SK-N-SH (cell line): ENCODE measurements at regions of chr7 and their contacts with region 1.

Region 1: DNA sequence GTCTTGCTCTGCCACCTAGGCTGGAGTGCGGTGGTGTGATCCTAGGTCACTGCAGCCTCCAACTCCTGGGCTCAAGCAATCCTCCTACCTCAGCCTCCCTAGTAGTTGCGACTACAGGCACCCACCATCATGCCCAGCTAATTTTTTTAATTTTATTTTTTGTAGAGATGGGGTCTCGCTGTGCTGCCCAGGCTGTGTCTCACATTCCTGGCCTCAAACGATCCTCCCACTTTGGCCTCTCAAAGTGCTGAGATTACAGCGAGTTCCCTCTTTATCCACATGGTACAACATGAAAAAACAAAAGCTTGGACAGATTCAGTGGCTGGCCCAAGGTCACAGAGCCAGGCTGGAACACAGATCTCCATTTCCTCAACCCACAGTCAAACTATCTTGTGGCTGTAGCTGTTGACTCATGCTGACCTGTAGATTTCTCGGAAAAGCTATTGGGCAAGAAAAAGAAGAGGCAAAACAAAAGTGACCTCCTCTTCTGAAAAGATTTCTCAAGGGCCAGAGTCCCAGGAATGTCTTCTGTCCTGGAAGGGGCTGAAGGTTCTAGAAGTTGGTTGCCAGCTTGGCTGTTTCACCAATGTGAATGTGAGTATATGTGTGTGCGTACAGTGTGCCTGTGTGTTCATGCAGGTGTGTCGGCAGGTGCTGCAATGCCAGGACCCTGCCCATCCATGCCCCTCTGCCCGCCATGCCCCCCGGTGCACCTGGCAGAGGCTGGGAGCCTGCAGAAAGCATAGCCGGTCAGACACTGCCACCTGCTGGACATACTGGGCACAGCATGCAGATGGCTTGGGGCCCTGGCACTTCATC is 28.4 kb downstream of the TMEM130 start:
- DNase-seq: peak; percentile 88
- H3K4me3 ChIP-seq: peak overlapping the region in 1 of 2 experiments; percentile 6; a peak in 1 of 4 replicates
- H3K27ac ChIP-seq: no peak overlapping the region
- H3K4me1 ChIP-seq: no peaks in the 10 kb centered on the region; a peak in 1 of 4 replicates
- H3K27me3 ChIP-seq: no peaks in the 10 kb centered on the region
- CTCF ChIP-seq: peak; percentile 100
- EP300 ChIP-seq: no peak
- RAD21 ChIP-seq: peak; percentile 99

Region 2: DNA sequence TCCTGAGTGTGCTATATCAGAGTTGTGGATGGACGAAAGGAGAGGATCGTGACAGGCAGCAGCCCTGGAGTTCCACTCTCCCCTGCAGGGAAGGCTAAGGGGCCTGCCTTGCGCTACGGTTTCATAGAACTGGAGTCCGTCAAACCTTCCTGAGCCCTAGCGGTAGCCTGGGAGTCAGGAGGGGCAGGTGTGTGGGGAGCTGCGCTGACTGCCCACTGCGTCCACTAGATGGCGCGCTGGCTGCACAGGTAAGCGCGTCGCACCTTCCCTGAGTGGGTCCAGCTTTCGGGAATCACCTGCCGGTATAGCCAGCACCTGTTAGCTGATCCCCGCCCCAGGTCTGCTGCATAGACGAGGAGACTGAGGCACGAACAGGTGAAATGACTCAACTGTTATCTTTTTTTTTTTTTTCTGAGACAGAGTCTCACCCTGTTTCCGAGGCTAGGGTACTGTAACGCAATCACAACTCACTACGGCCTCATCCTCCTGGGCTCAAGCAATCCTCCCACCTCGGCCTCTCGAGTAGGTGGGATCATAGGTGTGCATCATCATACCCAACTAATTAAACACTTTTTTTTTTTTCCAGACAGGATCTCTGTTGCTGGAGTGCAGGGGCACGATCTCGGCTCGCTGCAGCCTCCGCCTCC is 420.3 kb before region 1 on chr7:
- CTCF ChIA-PET with region 1: interaction called, 673 read pairs
- POLR2A ChIA-PET with region 1: no interaction called
- DNase-seq: peak; percentile 87
- H3K4me3 ChIP-seq: peak overlapping the region in 1 of 2 experiments; percentile 45; a peak in 1 of 4 replicates
- H3K27ac ChIP-seq: no peak overlapping the region
- H3K4me1 ChIP-seq: peaks cover 3 to 6% of the 10 kb centered on the region in 2 experiments; a peak in 2 of 4 replicates
- H3K27me3 ChIP-seq: no peaks in the 10 kb centered on the region
- CTCF ChIP-seq: peak; percentile 100
- EP300 ChIP-seq: no peak
- RAD21 ChIP-seq: peak; percentile 81

Region 3: DNA sequence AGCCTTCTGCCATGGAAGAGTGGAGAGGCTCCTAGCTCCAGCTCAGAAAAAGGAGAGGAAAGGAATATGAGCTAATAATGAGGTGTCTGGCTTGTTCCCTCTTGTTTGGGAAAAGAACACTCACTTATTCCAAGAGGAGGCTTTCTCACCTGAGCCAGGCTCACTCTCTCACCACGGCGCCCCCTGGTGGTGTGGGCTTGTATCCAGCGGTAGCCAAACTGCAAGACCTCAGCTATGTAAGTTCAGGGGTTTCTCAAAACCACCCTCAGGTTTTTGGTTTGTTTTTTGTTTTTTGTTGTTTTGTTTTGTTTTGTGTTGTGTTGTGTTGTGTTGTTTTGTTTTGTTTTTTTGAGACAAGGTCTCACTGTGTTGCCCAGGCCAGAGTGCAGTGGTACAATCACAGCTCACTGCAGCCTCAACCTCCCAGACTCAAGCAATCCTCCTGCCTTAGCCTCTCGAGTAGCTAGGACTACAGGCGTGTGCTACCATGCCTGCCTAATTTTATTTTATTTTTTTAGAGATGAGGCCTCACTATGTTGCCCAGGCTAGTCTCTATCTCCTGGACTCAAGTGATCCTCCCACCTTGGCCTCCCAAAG is 95.6 kb before region 1 on chr7:
- CTCF ChIA-PET with region 1: interaction called, 249 read pairs
- POLR2A ChIA-PET with region 1: no interaction called
- DNase-seq: peak; percentile 79
- H3K4me3 ChIP-seq: peak overlapping the region in 1 of 2 experiments; percentile 56; a peak in 1 of 4 replicates
- H3K27ac ChIP-seq: no peak overlapping the region
- H3K4me1 ChIP-seq: no peaks in the 10 kb centered on the region
- H3K27me3 ChIP-seq: no peaks in the 10 kb centered on the region
- CTCF ChIP-seq: peak; percentile 59
- EP300 ChIP-seq: no peak
- RAD21 ChIP-seq: peak; percentile 79

Region 4: GRCh38 chr7:98795741-98796493 is 45.5 kb before region 1 on chr7:
- CTCF ChIA-PET with region 1: interaction called, 20 read pairs
- POLR2A ChIA-PET with region 1: no interaction called
- DNase-seq: no peak
- H3K4me3 ChIP-seq: no peak overlapping the region
- H3K27ac ChIP-seq: no peak overlapping the region
- H3K4me1 ChIP-seq: no peaks in the 10 kb centered on the region; a peak in 1 of 4 replicates
- H3K27me3 ChIP-seq: no peaks in the 10 kb centered on the region
- CTCF ChIP-seq: no peak
- EP300 ChIP-seq: no peak
- RAD21 ChIP-seq: no peak

Region 5: GRCh38 chr7:98826387-98827231 is 14.8 kb before region 1 on chr7:
- CTCF ChIA-PET with region 1: interaction called, 104 read pairs
- POLR2A ChIA-PET with region 1: no interaction called
- DNase-seq: peak; percentile 88
- H3K4me3 ChIP-seq: no peak overlapping the region
- H3K27ac ChIP-seq: peak overlapping the region in 1 of 2 experiments; percentile 62; a peak in 2 of 4 replicates
- H3K4me1 ChIP-seq: peaks cover 0 to 17% of the 10 kb centered on the region in 2 experiments; a peak in 1 of 4 replicates
- H3K27me3 ChIP-seq: no peaks in the 10 kb centered on the region
- CTCF ChIP-seq: no peak
- EP300 ChIP-seq: peak in 1 of 2 experiments; percentile 69; a peak in 2 of 4 replicates
- RAD21 ChIP-seq: peak; percentile 32; the same call in 1 of the 2 replicates

Region 6: GRCh38 chr7:98878365-98879165 is 37.2 kb after region 1 on chr7 and contains the start of gene TRRAP:
- CTCF ChIA-PET with region 1: interaction called, 22 read pairs
- POLR2A ChIA-PET with region 1: no interaction called
- DNase-seq: peak; percentile 98
- H3K4me3 ChIP-seq: peak within 1 kb of the TSS; percentile 75 to 99
- H3K27ac ChIP-seq: peak within 1 kb of the TSS; percentile 73 to 89
- H3K4me1 ChIP-seq: peaks cover 0 to 15% of the 10 kb centered on the region in 2 experiments; a peak in 1 of 4 replicates
- H3K27me3 ChIP-seq: no peaks in the 10 kb centered on the region
- CTCF ChIP-seq: peak; percentile 87
- EP300 ChIP-seq: 0 out of 4 replicates have a peak, but pooled peaks of 1 of the 2 experiments have one; percentile 24
- RAD21 ChIP-seq: no peak
- polyA plus RNA-seq, gene TRRAP: 19.6 and 24.9 TPM in 2 replicates